Activated T-helper 1 cell treated with anti-CD3 and anti-CD28 coated beads, Interleukin-12 subunit alpha, Interleukin-12 subunit beta, Interleukin-2, Interleukin-4 antibody, amounts not matched to agents 30 ng/mL and 10 ng/mL and 1 ng/mL, durations not matched to agents 14 hours and 24 hours and 36 hours (primary cell): ENCODE measurements at regions of chr4 and their contacts with region 1.

Region 1: GRCh38 chr4:124334119-124334518 is 378.4 kb downstream of the ANKRD50 start:
- DNase-seq: no peak
- H3K4me3 Mint-ChIP-seq: no peak overlapping the region
- H3K27ac Mint-ChIP-seq: no peak overlapping the region
- H3K4me1 Mint-ChIP-seq: no peaks in the 10 kb centered on the region
- H3K27me3 Mint-ChIP-seq: no peaks in the 10 kb centered on the region

Region 2: GRCh38 chr4:124555959-124556358 is 221.8 kb after region 1 on chr4:
- intact Hi-C with region 1: no loop called
- DNase-seq: no peak
- H3K4me3 Mint-ChIP-seq: no peak overlapping the region
- H3K27ac Mint-ChIP-seq: no peak overlapping the region
- H3K4me1 Mint-ChIP-seq: no peaks in the 10 kb centered on the region
- H3K27me3 Mint-ChIP-seq: no peaks in the 10 kb centered on the region

Region 3: GRCh38 chr4:124566030-124566429 is 231.9 kb after region 1 on chr4:
- intact Hi-C with region 1: no loop called
- DNase-seq: no peak
- H3K4me3 Mint-ChIP-seq: no peak overlapping the region
- H3K27ac Mint-ChIP-seq: no peak overlapping the region
- H3K4me1 Mint-ChIP-seq: no peaks in the 10 kb centered on the region
- H3K27me3 Mint-ChIP-seq: no peaks in the 10 kb centered on the region

Region 4: DNA sequence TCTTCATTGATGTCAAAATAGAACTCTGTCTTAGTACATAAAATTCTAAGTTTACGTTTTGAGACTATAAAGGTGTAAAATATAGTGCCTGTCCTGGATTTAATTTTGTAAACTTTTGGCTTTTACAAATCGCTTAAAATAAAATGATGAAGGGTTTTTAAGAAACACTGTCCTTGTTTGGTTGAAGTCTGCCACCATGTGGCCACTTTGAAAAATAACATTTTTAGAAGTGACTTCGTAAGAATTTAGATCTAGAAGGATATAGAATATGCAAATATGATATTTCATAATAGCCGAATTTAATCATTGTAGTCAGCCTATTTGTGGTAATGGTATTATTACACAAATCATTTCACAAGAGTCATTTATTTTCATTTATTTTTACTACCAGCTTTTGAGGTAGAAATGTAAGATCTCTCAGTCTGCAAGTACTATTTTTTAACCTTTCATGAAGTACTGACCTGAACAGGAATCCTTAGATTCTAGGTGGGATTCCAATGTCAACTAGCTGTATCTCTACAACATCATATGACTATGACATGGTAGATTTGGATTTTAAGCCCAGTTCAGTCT is 949.7 kb after region 1 on chr4:
- intact Hi-C with region 1: loop called (anchors 1 kb)
- DNase-seq: no peak
- H3K4me3 Mint-ChIP-seq: no peak overlapping the region
- H3K27ac Mint-ChIP-seq: no peak overlapping the region
- H3K4me1 Mint-ChIP-seq: no peaks in the 10 kb centered on the region
- H3K27me3 Mint-ChIP-seq: no peaks in the 10 kb centered on the region